ENCODE measurements at regions of chr4 and their contacts with region 1.

Region 1: GRCh38 chr4:89024051-89024675 is 32.8 kb downstream of the FAM13A start:
- DNase-seq: peak; percentile 59 to 91
- H3K4me3 ChIP-seq: no peak overlapping the region
- H3K27ac ChIP-seq: no peak overlapping the region
- H3K4me1 ChIP-seq: peaks cover 7 to 23% (median 15%) of the 10 kb centered on the region in 4 donors
- H3K27me3 ChIP-seq: no peaks in the 10 kb centered on the region
- CTCF ChIP-seq: peak in 6 of 7 experiments; percentile 25 to 94 (median 74)
- EP300 ChIP-seq: no peak
- POLR2A ChIP-seq: no peak

Region 2: DNA sequence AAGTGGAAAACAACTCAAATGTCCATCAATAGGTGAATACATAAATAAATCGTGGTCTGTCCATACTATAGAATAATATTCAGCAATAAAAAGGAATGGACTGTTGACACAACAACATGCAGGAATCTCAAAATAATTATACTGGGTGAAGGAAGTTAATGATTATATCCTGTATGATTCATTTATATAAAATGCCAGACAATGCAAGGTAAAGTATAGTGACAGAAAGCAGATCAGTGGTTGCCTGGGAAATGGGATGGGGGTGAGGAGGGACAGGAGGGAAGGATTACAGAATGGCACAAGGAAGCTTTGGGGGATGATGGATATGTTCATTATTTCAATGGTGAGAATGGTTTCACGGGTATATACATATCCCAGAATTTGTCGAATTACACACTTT is 512.9 kb before region 1 on chr4:
- intact Hi-C with region 1: no loop called
- DNase-seq: no peak
- H3K4me3 ChIP-seq: no peak overlapping the region
- H3K27ac ChIP-seq: no peak overlapping the region
- H3K4me1 ChIP-seq: peaks cover 8 to 15% (median 11%) of the 10 kb centered on the region in 4 donors
- H3K27me3 ChIP-seq: no peaks in the 10 kb centered on the region
- CTCF ChIP-seq: no peak
- EP300 ChIP-seq: no peak
- POLR2A ChIP-seq: no peak

Region 3: DNA sequence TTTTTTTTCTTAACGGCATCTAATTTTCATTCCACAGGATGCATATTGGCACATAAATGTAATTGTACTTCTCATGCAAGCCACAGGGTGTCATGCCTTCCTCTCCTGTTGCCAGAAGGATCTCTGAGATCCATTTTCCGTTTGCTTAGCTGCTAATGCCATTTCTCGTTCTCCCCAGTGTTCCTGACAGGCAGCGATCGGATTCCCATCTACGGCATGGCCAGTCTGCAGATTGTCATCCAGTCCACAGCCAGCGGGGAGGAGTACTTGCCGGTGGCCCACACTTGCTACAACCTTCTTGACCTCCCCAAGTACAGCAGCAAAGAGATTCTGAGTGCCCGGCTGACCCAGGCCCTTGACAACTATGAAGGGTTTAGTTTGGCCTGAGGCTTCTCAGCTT is 317.6 kb before region 1 on chr4:
- intact Hi-C with region 1: loop called (anchors 10 kb)
- DNase-seq: peak in 1 of 2 donors; percentile 81
- H3K4me3 ChIP-seq: no peak overlapping the region
- H3K27ac ChIP-seq: peak overlapping the region in 3 of 5 donors; percentile 16 to 54 (median 36)
- H3K4me1 ChIP-seq: peaks cover 0 to 12% (median 6%) of the 10 kb centered on the region in 4 donors
- H3K27me3 ChIP-seq: no peaks in the 10 kb centered on the region
- CTCF ChIP-seq: peak in 5 of 7 experiments; percentile 41 to 88 (median 52)
- EP300 ChIP-seq: no peak
- POLR2A ChIP-seq: no peak

Measured in stomach (tissue), 19 donors.